Natural killer cell (primary cell): ENCODE measurements at regions of chr1 and their contacts with region 1.

Region 1: DNA sequence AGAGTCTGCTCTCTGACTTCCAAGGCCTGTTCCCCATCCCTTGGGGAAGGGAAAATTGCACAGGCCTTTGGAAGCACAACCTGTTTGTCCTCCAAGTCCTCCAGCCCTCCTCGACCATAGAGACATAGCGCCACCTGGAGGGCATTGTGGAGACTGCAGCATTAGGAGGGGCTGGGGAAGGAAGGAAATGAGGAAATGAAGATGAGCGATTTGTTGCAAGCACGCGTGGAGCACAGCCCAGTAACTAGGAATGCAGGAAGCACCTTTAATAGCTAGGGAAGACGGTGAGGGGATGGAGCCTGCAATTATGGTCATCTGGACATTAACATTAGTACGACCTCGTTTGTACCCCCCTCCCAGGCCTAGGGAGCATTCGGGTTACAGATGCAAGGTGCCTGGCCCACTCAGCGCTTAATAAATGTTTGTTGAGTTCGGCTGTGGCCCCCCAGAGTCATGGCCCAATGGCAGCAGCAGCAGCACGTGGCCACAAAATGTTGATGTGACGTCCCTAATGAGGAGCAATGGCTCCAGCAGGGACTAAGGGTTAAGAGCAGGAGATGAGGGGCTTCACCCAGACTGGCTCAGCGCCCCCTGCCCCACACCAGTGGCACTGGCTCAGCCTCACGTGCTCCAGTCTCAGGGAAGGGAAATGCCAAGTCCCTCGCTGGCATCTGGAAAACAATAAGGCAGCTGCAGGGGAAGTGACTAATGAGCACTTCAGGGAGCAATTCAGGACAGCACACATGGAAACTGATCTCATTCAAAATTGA is 8.0 kb upstream of the CAMK2N1 start:
- DNase-seq: peak; percentile 77 to 91
- ATAC-seq: peak; percentile 82 to 97 (median 90)
- H3K4me3 ChIP-seq: no peak overlapping the region
- H3K4me3 Mint-ChIP-seq: no peak overlapping the region
- H3K27ac ChIP-seq: no peak overlapping the region
- H3K27ac Mint-ChIP-seq: no peak overlapping the region
- H3K4me1 ChIP-seq: peaks cover 8% of the 10 kb centered on the region
- H3K4me1 Mint-ChIP-seq: peaks cover 5% of the 10 kb centered on the region in 2 donors
- H3K27me3 ChIP-seq: no peaks in the 10 kb centered on the region
- H3K27me3 Mint-ChIP-seq: peaks cover 10 to 11% of the 10 kb centered on the region in 2 donors
- CTCF ChIP-seq: peak; percentile 96

Region 2: GRCh38 chr1:19918057-19918456 is 576.0 kb before region 1 on chr1:
- intact Hi-C with region 1: loop called (anchors 2 kb)
- DNase-seq: peak; percentile 68 to 89
- ATAC-seq: peak; percentile 54 to 79 (median 55)
- H3K4me3 ChIP-seq: no peak overlapping the region
- H3K4me3 Mint-ChIP-seq: no peak overlapping the region
- H3K27ac ChIP-seq: no peak overlapping the region
- H3K27ac Mint-ChIP-seq: no peak overlapping the region
- H3K4me1 ChIP-seq: no peaks in the 10 kb centered on the region
- H3K4me1 Mint-ChIP-seq: peaks cover 4 to 6% of the 10 kb centered on the region in 2 donors
- H3K27me3 ChIP-seq: no peaks in the 10 kb centered on the region
- H3K27me3 Mint-ChIP-seq: peaks cover 0 to 3% of the 10 kb centered on the region in 2 donors
- CTCF ChIP-seq: peak; percentile 77

Region 3: GRCh38 chr1:20212685-20213331 is 281.2 kb before region 1 on chr1:
- intact Hi-C with region 1: loop called (anchors 1 kb)
- DNase-seq: peak; percentile 28 to 76
- ATAC-seq: peak; percentile 59 to 78 (median 64)
- H3K4me3 ChIP-seq: no peak overlapping the region
- H3K4me3 Mint-ChIP-seq: peak overlapping the region; percentile 67
- H3K27ac ChIP-seq: no peak overlapping the region
- H3K27ac Mint-ChIP-seq: no peak overlapping the region
- H3K4me1 ChIP-seq: peaks cover 13% of the 10 kb centered on the region
- H3K4me1 Mint-ChIP-seq: peaks cover 0 to 9% of the 10 kb centered on the region in 2 donors
- H3K27me3 ChIP-seq: no peaks in the 10 kb centered on the region
- H3K27me3 Mint-ChIP-seq: peaks cover 36 to 48% of the 10 kb centered on the region in 2 donors
- CTCF ChIP-seq: peak; percentile 79

Region 4: GRCh38 chr1:20361806-20362640 is 132.0 kb before region 1 on chr1:
- intact Hi-C with region 1: loop called (anchors 5 kb)
- DNase-seq: peak in 1 of 2 donors; percentile 44
- ATAC-seq: no peak
- H3K4me3 ChIP-seq: no peak overlapping the region
- H3K4me3 Mint-ChIP-seq: no peak overlapping the region
- H3K27ac ChIP-seq: no peak overlapping the region
- H3K27ac Mint-ChIP-seq: no peak overlapping the region
- H3K4me1 ChIP-seq: no peaks in the 10 kb centered on the region
- H3K4me1 Mint-ChIP-seq: no peaks in the 10 kb centered on the region
- H3K27me3 ChIP-seq: peaks cover 5% of the 10 kb centered on the region
- H3K27me3 Mint-ChIP-seq: peaks cover 29 to 47% of the 10 kb centered on the region in 2 donors
- CTCF ChIP-seq: peak; percentile 29

Region 5: DNA sequence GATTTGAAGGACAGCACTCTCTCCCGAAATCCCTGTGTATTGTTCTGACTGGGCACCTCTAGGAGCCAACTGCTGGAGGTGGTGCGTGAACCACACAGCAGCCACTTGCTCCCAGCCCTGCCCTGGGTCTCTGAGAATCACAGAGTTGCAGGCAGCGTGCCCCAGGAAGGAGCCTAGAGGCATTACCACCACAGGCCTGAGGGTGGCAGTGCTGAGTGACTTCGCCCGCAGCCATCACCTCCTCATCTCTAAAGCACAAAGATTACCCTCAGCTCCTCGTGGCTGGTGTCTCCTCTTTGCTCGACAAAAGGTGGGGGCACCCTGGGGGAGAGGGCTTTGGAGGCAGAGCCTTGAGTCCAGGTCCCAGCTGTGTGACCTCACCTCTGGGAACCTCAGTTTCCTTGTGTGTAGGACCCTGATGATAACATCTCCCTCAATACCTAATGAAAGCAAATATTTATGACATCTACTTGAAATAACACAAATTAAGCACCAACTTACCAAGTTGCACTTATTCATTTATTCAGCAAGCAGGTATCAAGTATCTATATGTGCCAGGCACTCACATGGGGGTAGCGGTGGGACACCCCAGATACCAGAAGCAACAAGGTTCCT is 117.0 kb before region 1 on chr1:
- intact Hi-C with region 1: loop called (anchors 1 kb)
- DNase-seq: peak; percentile 35 to 67
- ATAC-seq: peak; percentile 55 to 80 (median 63)
- H3K4me3 ChIP-seq: no peak overlapping the region
- H3K4me3 Mint-ChIP-seq: no peak overlapping the region
- H3K27ac ChIP-seq: no peak overlapping the region
- H3K27ac Mint-ChIP-seq: no peak overlapping the region
- H3K4me1 ChIP-seq: no peaks in the 10 kb centered on the region
- H3K4me1 Mint-ChIP-seq: peaks cover 0 to under 1% of the 10 kb centered on the region in 2 donors
- H3K27me3 ChIP-seq: no peaks in the 10 kb centered on the region
- H3K27me3 Mint-ChIP-seq: peaks cover 8 to 16% of the 10 kb centered on the region in 2 donors
- CTCF ChIP-seq: peak; percentile 61

Region 6: GRCh38 chr1:20625176-20626097 is 131.4 kb after region 1 on chr1:
- intact Hi-C with region 1: no loop called
- DNase-seq: no peak
- ATAC-seq: no peak
- H3K4me3 ChIP-seq: no peak overlapping the region
- H3K4me3 Mint-ChIP-seq: no peak overlapping the region
- H3K27ac ChIP-seq: no peak overlapping the region
- H3K27ac Mint-ChIP-seq: no peak overlapping the region
- H3K4me1 ChIP-seq: no peaks in the 10 kb centered on the region
- H3K4me1 Mint-ChIP-seq: no peaks in the 10 kb centered on the region
- H3K27me3 ChIP-seq: no peaks in the 10 kb centered on the region
- H3K27me3 Mint-ChIP-seq: peaks cover 10 to 21% of the 10 kb centered on the region in 2 donors
- CTCF ChIP-seq: no peak